ENCODE measurements at regions of chr2 and their contacts with region 1.

Region 1: GRCh38 chr2:111883661-111884591 is at the start of gene ANAPC1:
- DNase-seq: peak; percentile 88
- H3K4me3 Mint-ChIP-seq: peak within 1 kb of the TSS; percentile 98
- H3K27ac Mint-ChIP-seq: peak within 1 kb of the TSS; percentile 92
- H3K4me1 Mint-ChIP-seq: peaks cover 16% of the 10 kb centered on the region
- H3K27me3 Mint-ChIP-seq: no peaks in the 10 kb centered on the region
- total RNA-seq, gene ANAPC1: 92.5 to 104 TPM

Region 2: DNA sequence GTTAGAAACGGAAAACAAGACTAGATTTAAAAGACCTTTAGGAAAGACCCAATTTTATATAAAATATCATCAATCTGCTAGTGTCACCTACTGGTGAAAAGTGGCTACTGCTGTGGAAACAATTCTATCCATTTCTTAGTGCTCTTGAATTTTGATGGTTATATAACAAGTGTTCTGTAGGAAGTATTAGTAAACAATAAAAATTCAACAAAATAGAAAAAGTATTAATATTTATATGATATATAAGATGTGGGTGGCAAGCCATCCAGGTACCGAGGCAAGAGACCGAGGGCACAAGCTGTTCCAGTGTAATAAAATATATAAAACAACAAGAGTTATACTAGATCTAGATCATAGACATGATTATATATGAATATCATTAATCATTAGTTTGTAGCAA is 165.0 kb after region 1 on chr2:
- CTCF ChIA-PET with region 1: interaction called, 23 read pairs
- intact Hi-C with region 1: loop called (anchors 1 kb)
- DNase-seq: peak; percentile 54
- H3K4me3 Mint-ChIP-seq: no peak overlapping the region
- H3K27ac Mint-ChIP-seq: no peak overlapping the region
- H3K4me1 Mint-ChIP-seq: peaks cover 8% of the 10 kb centered on the region
- H3K27me3 Mint-ChIP-seq: no peaks in the 10 kb centered on the region

Region 3: GRCh38 chr2:112187805-112188596 is 304.1 kb after region 1 on chr2:
- CTCF ChIA-PET with region 1: no interaction called
- intact Hi-C with region 1: loop called (anchors 2 kb)
- DNase-seq: peak; percentile 92
- H3K4me3 Mint-ChIP-seq: peak overlapping the region; percentile 63
- H3K27ac Mint-ChIP-seq: peak overlapping the region; percentile 99
- H3K4me1 Mint-ChIP-seq: peaks cover 87% of the 10 kb centered on the region
- H3K27me3 Mint-ChIP-seq: no peaks in the 10 kb centered on the region

Region 4: DNA sequence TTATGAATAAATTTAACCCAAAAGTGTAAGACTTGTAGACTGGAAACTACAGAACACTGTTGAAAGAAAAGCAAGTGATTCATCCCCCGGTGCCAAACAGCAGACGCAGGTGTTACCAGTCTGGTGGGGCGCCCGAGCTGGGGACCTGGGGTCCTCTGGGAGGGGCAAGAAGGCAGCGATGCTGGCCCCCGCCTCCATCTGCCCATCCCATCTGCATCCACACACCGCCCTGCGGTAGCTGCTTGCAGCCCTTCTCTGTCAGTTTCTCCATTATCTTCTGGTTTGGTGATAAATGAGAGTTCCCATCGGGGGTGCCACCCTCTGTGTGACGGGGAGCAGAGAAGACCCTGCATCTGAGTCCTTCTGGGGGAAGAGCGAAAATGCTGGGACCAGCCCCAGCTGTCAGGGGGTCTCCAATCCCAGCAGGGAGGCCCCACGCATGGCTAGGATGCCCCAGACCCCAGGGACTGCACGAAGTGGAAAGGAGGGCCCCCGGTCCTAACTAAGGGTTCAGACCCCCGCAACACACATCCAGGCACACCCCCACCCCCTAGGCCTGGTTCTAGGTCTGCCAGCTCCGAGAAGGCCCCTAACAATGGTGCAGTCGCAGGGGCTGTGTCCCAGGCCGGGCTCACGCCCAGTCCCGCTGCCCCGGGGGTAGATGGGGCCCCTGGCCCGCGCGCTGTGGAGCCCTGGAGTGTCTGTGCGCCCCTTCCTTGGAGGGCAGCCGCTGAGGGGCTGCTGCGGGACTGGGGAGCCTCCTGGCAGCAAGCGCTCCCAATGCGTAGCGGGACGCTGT is 550.2 kb after region 1 on chr2:
- CTCF ChIA-PET with region 1: no interaction called
- intact Hi-C with region 1: loop called (anchors 10 kb)
- DNase-seq: no peak
- H3K4me3 Mint-ChIP-seq: no peak overlapping the region
- H3K27ac Mint-ChIP-seq: no peak overlapping the region
- H3K4me1 Mint-ChIP-seq: peaks cover 18% of the 10 kb centered on the region
- H3K27me3 Mint-ChIP-seq: no peaks in the 10 kb centered on the region

Region 5: DNA sequence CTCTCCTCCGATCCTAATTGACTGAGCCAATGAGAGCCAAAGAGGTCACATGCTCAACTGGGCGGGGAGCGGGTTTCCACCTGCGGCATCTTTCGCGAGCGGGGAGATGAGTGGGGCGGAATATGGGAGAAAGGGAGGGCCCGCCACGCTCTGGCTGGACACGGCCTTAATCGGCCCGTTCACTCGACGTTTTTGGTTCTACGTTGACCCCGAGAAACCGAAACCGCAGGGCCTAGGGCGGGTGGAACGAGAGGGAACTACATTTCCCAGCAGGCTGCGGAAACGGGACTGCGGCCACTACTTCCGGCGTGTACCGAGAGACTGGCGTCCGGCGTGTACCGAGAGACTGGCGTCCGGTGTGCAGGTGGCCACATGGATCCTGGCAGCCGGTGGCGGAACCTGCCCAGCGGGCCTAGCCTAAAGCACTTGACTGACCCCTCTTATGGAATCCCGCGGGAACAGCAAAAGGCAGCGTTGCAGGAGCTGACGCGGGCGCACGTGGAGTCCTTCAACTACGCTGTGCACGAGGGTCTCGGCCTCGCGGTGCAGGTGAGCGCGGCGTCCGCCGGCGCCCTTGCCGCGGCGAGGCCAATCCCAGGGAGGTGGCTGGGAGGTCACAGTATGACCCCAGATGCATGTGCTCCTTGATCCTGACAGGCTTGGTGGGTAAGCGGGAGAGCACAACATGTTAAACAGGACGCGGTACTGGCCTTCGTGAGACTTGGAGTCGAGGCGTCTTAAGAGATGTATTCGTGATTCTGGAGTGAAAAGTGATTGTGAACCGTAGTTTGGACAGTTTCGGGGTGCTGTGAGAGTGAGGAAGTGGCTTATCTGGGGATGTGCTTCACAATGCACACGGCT is 658.4 kb after region 1 on chr2 and contains the start of gene POLR1B:
- CTCF ChIA-PET with region 1: no interaction called
- intact Hi-C with region 1: loop called (anchors 5 kb)
- DNase-seq: peak; percentile 82
- H3K4me3 Mint-ChIP-seq: no peak within 1 kb of the TSS
- H3K27ac Mint-ChIP-seq: no peak within 1 kb of the TSS
- H3K4me1 Mint-ChIP-seq: peaks cover 19% of the 10 kb centered on the region
- H3K27me3 Mint-ChIP-seq: no peaks in the 10 kb centered on the region
- total RNA-seq, gene POLR1B: 34.5 to 36.1 TPM